ENCODE measurements at regions of chr13 and their contacts with region 1.

Region 1: GRCh38 chr13:46387064-46387851 is at the start of gene RUBCNL:
- DNase-seq: peak; percentile 88
- H3K4me3 ChIP-seq: peak within 1 kb of the TSS; percentile 90
- H3K27ac ChIP-seq: peak within 1 kb of the TSS; percentile 96
- H3K4me1 ChIP-seq: peaks cover 48% of the 10 kb centered on the region
- H3K27me3 ChIP-seq: no peaks in the 10 kb centered on the region
- CTCF ChIP-seq: no peak
- total RNA-seq, gene RUBCNL: 110 and 126 TPM in 2 replicates

Region 2: GRCh38 chr13:45109102-45109720 is 1278.0 kb before region 1 on chr13:
- CTCF ChIA-PET with region 1: no interaction called
- POLR2A ChIA-PET with region 1: no interaction called
- intact Hi-C with region 1: no loop called
- DNase-seq: no peak
- H3K4me3 ChIP-seq: no peak overlapping the region
- H3K27ac ChIP-seq: no peak overlapping the region
- H3K4me1 ChIP-seq: no peaks in the 10 kb centered on the region
- H3K27me3 ChIP-seq: no peaks in the 10 kb centered on the region
- CTCF ChIP-seq: no peak

Region 3: DNA sequence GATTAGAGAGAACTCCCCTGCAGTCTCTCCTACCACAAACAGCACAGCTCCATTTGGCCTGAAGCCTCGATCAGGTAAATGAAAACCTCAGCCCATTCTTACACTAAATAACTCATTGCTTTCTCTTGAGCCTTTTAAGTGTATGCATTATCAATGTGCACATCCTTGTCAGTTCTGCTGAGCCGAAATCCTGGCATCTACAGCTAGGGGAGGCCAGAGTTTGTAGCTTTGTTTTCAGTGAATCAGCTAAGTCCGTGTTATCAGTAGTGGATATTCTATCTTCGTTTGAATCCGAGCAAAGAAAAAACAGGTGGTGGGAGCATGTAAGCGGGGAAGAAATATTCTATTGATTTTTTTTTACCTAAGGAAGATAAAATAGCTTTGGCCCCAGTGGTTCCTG is 325.3 kb after region 1 on chr13:
- CTCF ChIA-PET with region 1: no interaction called
- POLR2A ChIA-PET with region 1: no interaction called
- intact Hi-C with region 1: loop called (anchors 10 kb)
- DNase-seq: no peak
- H3K4me3 ChIP-seq: no peak overlapping the region
- H3K27ac ChIP-seq: no peak overlapping the region
- H3K4me1 ChIP-seq: peaks cover 18% of the 10 kb centered on the region
- H3K27me3 ChIP-seq: no peaks in the 10 kb centered on the region
- CTCF ChIP-seq: no peak